ENCODE measurements at regions of chr10 and their contacts with region 1.

Region 1: DNA sequence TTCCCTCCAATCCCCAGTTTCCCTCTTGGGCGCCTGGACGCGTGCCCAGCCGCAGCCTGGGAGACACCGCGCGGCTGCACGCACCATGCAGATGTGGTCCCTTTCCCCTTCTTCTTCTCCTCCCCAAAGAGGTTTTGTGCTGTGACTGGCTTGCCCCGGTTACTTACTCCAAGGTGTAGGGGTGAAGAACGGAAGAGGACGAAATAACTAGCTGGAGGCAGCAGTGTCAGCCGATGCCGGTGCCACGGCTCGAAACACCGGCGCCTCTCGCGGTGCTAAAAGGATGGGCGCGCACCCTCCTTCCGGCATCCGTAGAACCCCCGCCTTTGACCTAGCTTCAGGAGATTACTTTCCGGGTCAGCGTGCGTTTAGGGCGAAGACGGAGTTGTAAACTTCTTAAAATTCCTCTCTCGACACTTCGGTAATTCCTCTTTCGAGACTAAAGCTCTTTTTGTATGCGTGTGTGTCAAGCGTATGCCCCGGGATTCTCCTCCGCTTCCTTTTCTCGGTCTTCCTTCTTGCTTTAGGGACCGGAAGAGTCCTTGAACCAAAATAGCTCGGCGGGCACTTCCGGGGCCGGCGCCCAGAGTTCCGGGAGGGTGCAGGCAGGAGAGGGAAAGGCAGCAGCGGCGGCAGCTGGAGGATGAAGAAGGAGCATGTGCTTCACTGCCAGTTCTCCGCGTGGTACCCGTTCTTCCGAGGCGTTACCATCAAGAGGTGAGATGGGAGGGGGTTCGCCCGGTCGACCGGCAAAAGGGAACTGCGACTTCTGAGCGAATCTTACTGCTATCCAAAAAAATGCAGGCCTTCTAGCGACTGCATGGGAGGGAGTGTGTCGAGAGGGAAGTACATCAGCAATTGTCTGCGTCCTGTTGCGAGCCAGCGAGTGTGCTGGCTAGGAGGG is at the starts of genes CDC123 and NUDT5:
- DNase-seq: peak; percentile 77 to 89 (median 87)
- ATAC-seq: peak; percentile 96
- H3K4me3 ChIP-seq: peak within 1 kb of the TSS; percentile 84
- H3K4me3 Mint-ChIP-seq: peak within 1 kb of the TSS; percentile 94 to 99 (median 97)
- H3K27ac ChIP-seq: peak within 1 kb of the TSS; percentile 97
- H3K27ac Mint-ChIP-seq: peak within 1 kb of the TSS; percentile 96 to 99 (median 99)
- H3K4me1 ChIP-seq: peaks cover 9 to 12% of the 10 kb centered on the region in 2 donors
- H3K4me1 Mint-ChIP-seq: peaks cover 43 to 72% (median 59%) of the 10 kb centered on the region in 7 donors
- H3K27me3 ChIP-seq: no peaks in the 10 kb centered on the region
- H3K27me3 Mint-ChIP-seq: no peaks in the 10 kb centered on the region
- total RNA-seq, gene CDC123: 27.0 to 97.8 (median 34.2) TPM
- total RNA-seq, gene NUDT5: 24.5 to 89.4 (median 47.4) TPM

Region 2: GRCh38 chr10:10613656-10614244 is 1582.1 kb before region 1 on chr10:
- CTCF ChIA-PET with region 1: no interaction called
- POLR2A ChIA-PET with region 1: no interaction called
- intact Hi-C with region 1: no loop called
- DNase-seq: no peak
- ATAC-seq: no peak
- H3K4me3 ChIP-seq: no peak overlapping the region
- H3K4me3 Mint-ChIP-seq: no peak overlapping the region
- H3K27ac ChIP-seq: no peak overlapping the region
- H3K27ac Mint-ChIP-seq: no peak overlapping the region
- H3K4me1 ChIP-seq: no peaks in the 10 kb centered on the region
- H3K4me1 Mint-ChIP-seq: no peaks in the 10 kb centered on the region
- H3K27me3 ChIP-seq: peaks cover 0 to 4% of the 10 kb centered on the region in 2 donors
- H3K27me3 Mint-ChIP-seq: peaks cover 0 to 30% (median 20%) of the 10 kb centered on the region in 5 donors

Region 3: DNA sequence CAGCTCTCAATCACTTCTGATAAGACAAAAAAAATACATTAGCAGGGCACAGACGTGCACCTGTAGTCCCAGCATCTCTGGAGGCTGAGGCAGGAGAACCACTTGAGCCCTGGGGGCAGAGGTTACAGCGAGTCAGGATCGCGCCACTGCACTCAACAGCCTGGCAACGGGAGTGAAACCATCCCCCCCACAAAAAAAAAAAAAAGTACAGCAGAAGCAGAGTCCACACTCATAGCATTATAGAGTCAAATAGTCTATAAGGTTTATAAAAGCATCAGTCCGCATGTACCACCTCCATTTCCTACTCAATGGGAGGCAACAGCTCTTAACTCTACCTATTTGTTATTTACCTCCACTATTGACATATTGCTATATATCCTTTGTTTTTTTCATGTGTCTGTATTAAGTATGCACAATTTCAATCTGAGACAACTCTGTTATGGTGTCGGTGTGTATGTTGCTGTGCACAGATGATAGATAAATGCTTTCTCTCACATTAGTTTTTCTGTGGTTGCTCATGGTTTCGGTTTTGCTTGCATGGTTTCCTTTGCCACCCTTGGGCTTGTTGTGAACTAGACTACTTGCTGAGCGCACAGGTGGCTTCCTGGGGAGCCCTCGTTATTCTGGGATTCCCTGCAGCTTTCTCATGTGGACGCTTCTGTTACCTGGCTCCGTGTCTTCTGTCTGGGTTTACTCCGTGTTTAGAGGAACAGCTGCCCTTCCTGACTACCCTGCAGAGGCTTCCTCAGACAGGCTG is 332.3 kb before region 1 on chr10:
- CTCF ChIA-PET with region 1: no interaction called
- POLR2A ChIA-PET with region 1: no interaction called
- intact Hi-C with region 1: loop called in 1 of 2 experiments (anchors 5 kb)
- DNase-seq: peak in 8 of 9 donors; percentile 33 to 79 (median 54)
- ATAC-seq: peak; percentile 90
- H3K4me3 ChIP-seq: peak overlapping the region; percentile 33
- H3K4me3 Mint-ChIP-seq: peak overlapping the region; percentile 57 to 93 (median 76)
- H3K27ac ChIP-seq: peak overlapping the region; percentile 50
- H3K27ac Mint-ChIP-seq: peak overlapping the region; percentile 74 to 95 (median 89)
- H3K4me1 ChIP-seq: peaks cover 14% of the 10 kb centered on the region in 2 donors
- H3K4me1 Mint-ChIP-seq: peaks cover 11 to 42% (median 29%) of the 10 kb centered on the region in 7 donors
- H3K27me3 ChIP-seq: no peaks in the 10 kb centered on the region
- H3K27me3 Mint-ChIP-seq: peaks cover 0 to 78% (median 0%) of the 10 kb centered on the region in 5 donors

Region 4: DNA sequence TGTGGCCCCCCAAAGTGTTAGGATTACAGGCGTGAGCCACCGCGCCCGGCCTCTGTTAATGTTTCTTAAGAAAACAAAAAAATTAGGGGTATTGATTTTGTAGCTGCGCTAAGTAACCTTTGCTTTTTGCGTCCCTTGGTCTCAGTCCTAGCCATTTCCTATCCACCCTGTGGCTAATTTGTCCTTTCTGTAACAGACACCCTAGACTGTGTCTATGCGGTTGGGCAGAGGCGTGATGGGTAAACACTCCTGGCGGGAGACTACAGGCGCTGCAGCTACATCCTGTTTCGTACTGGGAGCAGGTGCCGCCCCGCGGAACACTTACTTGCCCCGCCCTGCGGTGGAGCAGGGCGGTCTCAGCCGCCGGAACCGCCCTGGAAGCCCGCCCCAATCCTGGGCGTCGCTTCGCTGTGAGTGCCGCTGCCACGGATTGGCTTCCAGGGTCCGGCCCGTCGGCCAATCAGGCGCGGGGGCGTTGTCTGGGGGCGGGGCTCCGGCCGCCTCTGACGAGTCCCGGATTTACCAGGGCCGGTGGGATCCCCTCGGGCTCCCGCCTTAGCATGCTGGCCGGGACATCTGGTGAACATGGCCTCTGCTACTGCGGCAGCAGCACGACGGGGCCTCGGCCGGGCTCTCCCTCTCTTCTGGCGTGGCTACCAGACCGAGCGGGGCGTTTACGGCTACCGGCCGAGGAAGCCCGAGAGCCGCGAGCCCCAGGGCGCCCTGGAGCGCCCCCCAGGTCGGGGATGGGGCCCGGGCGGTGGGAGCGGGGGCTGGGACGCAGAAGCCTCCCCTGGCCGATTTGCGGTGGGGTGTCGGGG is 127.2 kb before region 1 on chr10 and contains the start of gene DHTKD1:
- CTCF ChIA-PET with region 1: interaction called, 3 read pairs
- POLR2A ChIA-PET with region 1: no interaction called
- intact Hi-C with region 1: loop called (anchors 1 kb)
- DNase-seq: peak; percentile 96 to 100 (median 98)
- ATAC-seq: peak; percentile 99
- H3K4me3 ChIP-seq: peak within 1 kb of the TSS; percentile 85
- H3K4me3 Mint-ChIP-seq: peak within 1 kb of the TSS; percentile 84 to 92 (median 88)
- H3K27ac ChIP-seq: peak within 1 kb of the TSS; percentile 85
- H3K27ac Mint-ChIP-seq: peak within 1 kb of the TSS; percentile 85 to 99 (median 95)
- H3K4me1 ChIP-seq: peaks cover 6 to 15% of the 10 kb centered on the region in 2 donors
- H3K4me1 Mint-ChIP-seq: peaks cover 12 to 27% (median 20%) of the 10 kb centered on the region in 7 donors
- H3K27me3 ChIP-seq: no peaks in the 10 kb centered on the region
- H3K27me3 Mint-ChIP-seq: no peaks in the 10 kb centered on the region
- total RNA-seq, gene DHTKD1: 10.8 to 25.9 (median 12.5) TPM

Region 5: DNA sequence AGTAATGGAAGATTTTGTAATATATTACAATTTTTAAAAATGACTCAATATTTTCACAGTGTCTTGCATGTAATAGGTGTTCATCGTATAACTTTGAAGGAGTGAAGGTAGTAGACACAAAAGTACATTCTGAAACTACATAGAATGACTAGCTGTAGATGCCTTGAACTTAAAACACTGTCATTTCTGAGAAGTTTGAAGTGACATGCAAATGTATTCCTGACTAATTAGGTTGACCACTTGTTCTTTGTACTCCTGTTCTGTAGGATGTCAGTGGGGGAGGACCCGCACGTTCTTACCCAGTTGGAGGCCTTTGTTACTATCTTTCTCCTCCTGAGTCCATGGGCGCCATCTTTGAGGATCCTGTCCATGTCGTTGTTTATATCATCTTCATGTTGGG is 35.2 kb before region 1 on chr10:
- CTCF ChIA-PET with region 1: no interaction called
- POLR2A ChIA-PET with region 1: no interaction called
- intact Hi-C with region 1: no loop called
- DNase-seq: no peak
- ATAC-seq: no peak
- H3K4me3 ChIP-seq: no peak overlapping the region
- H3K4me3 Mint-ChIP-seq: no peak overlapping the region
- H3K27ac ChIP-seq: no peak overlapping the region
- H3K27ac Mint-ChIP-seq: no peak overlapping the region
- H3K4me1 ChIP-seq: no peaks in the 10 kb centered on the region
- H3K4me1 Mint-ChIP-seq: no peaks in the 10 kb centered on the region
- H3K27me3 ChIP-seq: no peaks in the 10 kb centered on the region
- H3K27me3 Mint-ChIP-seq: no peaks in the 10 kb centered on the region

Region 6: GRCh38 chr10:12181065-12181775 is 14.6 kb before region 1 on chr10:
- CTCF ChIA-PET with region 1: no interaction called
- POLR2A ChIA-PET with region 1: interaction called, 4 read pairs
- intact Hi-C with region 1: loop called (anchors 1 kb)
- DNase-seq: peak in 8 of 9 donors; percentile 13 to 57 (median 48)
- ATAC-seq: peak; percentile 99
- H3K4me3 ChIP-seq: no peak overlapping the region
- H3K4me3 Mint-ChIP-seq: peak overlapping the region in 7 of 10 donors; percentile 12 to 68 (median 32)
- H3K27ac ChIP-seq: peak overlapping the region; percentile 17
- H3K27ac Mint-ChIP-seq: peak overlapping the region; percentile 54 to 92 (median 78)
- H3K4me1 ChIP-seq: peaks cover 0 to 17% of the 10 kb centered on the region in 2 donors
- H3K4me1 Mint-ChIP-seq: peaks cover 0 to 46% (median 8%) of the 10 kb centered on the region in 7 donors
- H3K27me3 ChIP-seq: no peaks in the 10 kb centered on the region
- H3K27me3 Mint-ChIP-seq: no peaks in the 10 kb centered on the region

Region 7: GRCh38 chr10:12638103-12638502 is 442.2 kb after region 1 on chr10:
- CTCF ChIA-PET with region 1: no interaction called
- POLR2A ChIA-PET with region 1: no interaction called
- intact Hi-C with region 1: loop called in 1 of 2 experiments (anchors 5 kb)
- DNase-seq: peak in 1 of 9 donors; percentile 14
- ATAC-seq: no peak
- H3K4me3 ChIP-seq: no peak overlapping the region
- H3K4me3 Mint-ChIP-seq: peak overlapping the region in 8 of 10 donors; percentile 1 to 69 (median 24)
- H3K27ac ChIP-seq: no peak overlapping the region
- H3K27ac Mint-ChIP-seq: peak overlapping the region in 6 of 9 donors; percentile 16 to 90 (median 54)
- H3K4me1 ChIP-seq: peaks cover 0 to 20% of the 10 kb centered on the region in 2 donors
- H3K4me1 Mint-ChIP-seq: peaks cover 24 to 63% (median 51%) of the 10 kb centered on the region in 7 donors
- H3K27me3 ChIP-seq: no peaks in the 10 kb centered on the region
- H3K27me3 Mint-ChIP-seq: no peaks in the 10 kb centered on the region

Region 8: GRCh38 chr10:13160934-13161856 is 965.3 kb after region 1 on chr10 and contains the start of gene MCM10:
- CTCF ChIA-PET with region 1: no interaction called
- POLR2A ChIA-PET with region 1: no interaction called
- intact Hi-C with region 1: loop called in 1 of 2 experiments (anchors 5 kb)
- DNase-seq: peak; percentile 86 to 99 (median 96)
- ATAC-seq: peak; percentile 100
- H3K4me3 ChIP-seq: peak within 1 kb of the TSS; percentile 47
- H3K4me3 Mint-ChIP-seq: peak within 1 kb of the TSS; percentile 64 to 93 (median 88)
- H3K27ac ChIP-seq: no peak within 1 kb of the TSS
- H3K27ac Mint-ChIP-seq: peak within 1 kb of the TSS; percentile 44 to 89 (median 74)
- H3K4me1 ChIP-seq: peaks cover 6 to 10% of the 10 kb centered on the region in 2 donors
- H3K4me1 Mint-ChIP-seq: peaks cover 3 to 38% (median 19%) of the 10 kb centered on the region in 7 donors
- H3K27me3 ChIP-seq: no peaks in the 10 kb centered on the region
- H3K27me3 Mint-ChIP-seq: peaks cover 0 to 2% (median 0%) of the 10 kb centered on the region in 5 donors
- total RNA-seq, gene MCM10: 0.08 to 41.8 (median 0.42) TPM